ENCODE measurements at regions of chr1 and their contacts with region 1.

Region 1: DNA sequence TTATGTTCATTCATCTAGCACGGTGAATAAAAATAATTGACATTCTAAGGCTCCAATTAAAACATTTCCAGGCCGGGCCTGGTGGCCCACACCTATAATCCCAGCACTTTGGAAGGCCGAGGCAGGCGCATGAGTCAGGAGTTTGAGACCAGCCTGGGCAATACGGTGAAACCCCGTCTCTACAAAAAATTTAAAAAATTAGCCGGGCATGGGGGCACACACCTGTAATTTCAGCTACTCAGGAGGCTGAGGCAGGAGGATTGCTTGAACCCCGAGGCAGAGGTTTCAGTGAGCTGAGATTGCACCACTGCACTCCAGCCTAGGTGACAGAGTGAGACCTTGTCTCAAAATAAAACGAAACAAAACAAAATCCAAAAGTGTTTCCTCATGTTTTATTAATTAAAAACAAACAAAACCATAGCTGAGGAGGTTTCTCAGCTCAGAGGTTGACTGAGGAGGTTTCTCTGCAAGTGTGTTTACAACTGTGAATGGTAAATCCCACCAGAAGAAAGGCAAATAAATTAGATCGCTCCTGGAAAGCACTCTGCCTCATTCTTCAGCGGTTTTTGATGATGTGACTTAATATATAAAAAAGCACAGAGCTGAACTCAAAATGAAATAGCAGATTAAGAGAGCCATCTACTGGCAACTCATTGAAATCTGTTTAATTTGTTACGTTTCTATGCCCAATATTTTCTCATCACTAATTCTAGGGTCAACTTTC is 37.7 kb upstream of the ATG4C start:
- DNase-seq: no peak
- ATAC-seq: no peak
- H3K4me3 Mint-ChIP-seq: no peak overlapping the region
- H3K27ac Mint-ChIP-seq: no peak overlapping the region
- H3K4me1 Mint-ChIP-seq: no peaks in the 10 kb centered on the region
- H3K27me3 Mint-ChIP-seq: peaks cover 4% of the 10 kb centered on the region

Region 2: DNA sequence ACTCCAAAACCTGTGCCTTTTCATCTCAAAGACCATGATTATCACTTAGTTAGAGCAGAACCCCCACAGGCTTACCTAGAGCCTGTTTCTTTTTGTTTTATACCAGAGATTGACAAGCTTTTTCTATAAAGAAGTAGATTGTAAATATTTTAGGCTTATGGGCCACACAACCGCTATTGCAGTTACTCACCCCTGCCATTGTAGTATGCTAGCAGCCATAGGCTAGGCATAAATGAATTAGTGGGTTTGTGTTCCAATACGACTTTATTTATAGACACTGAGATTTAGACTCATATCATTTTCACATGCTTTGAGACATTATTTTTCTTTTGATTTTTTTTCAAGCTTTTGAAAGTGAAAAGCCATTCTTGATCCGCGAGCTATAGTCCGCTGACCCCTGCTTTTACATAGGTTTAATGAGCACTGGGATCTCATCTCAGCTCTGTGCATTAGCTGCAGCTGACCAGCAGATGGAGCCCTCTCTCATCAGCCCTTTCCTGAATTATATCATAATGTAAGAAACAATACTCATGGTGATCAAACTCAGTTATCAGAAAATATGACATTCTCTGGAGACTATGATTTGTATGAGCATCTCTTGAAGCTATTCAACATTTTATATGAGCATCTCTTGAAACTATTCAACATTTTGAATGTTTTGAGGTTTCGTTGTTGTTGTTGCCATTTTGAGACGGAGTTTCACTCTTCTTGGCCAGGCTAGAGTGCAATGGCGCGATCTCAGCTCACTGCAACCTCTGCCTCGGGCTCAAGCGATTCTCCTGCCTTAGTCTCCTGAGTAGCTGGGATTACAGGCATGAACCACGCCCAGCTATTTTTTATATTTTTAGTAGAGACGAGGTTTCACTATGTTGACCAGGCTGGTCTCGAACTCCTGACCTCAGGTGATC is 663.5 kb before region 1 on chr1:
- CTCF ChIA-PET with region 1: no interaction called
- POLR2A ChIA-PET with region 1: no interaction called
- intact Hi-C with region 1: loop called (anchors 5 kb)
- DNase-seq: peak; percentile 61
- ATAC-seq: peak; percentile 80
- H3K4me3 Mint-ChIP-seq: no peak overlapping the region
- H3K27ac Mint-ChIP-seq: no peak overlapping the region
- H3K4me1 Mint-ChIP-seq: no peaks in the 10 kb centered on the region
- H3K27me3 Mint-ChIP-seq: no peaks in the 10 kb centered on the region

Region 3: DNA sequence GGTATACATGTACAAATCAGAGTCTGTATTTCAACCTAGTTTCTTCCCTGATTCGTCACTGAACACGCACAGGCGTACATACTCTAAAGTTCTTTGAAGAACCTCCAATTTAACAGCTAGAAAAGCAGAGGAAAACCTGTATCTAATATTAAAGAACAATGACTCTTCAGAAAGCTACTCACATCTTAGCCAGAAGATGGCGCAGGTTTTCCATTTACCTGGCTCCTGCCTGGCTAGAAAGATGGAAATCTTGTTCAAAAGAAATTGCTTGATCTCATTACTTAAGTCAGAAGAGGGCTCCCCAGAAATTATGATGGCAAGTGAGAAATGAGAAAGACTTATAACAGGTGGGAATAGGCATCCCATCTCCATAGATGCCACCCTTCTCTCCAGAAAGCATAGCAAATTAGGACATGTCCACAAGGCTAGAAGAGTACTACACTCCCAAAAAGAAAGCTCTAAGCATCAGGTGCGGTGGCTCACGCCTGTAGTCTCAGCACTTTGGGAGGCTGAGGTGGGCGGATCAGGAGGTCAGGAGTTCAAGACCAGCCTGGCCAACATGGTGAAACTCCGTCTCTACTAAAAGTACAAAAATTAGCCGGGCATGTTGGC is 570.6 kb before region 1 on chr1:
- CTCF ChIA-PET with region 1: interaction called, 10 read pairs
- POLR2A ChIA-PET with region 1: no interaction called
- intact Hi-C with region 1: loop called (anchors 1 kb)
- DNase-seq: peak; percentile 52
- ATAC-seq: peak; percentile 51
- H3K4me3 Mint-ChIP-seq: no peak overlapping the region
- H3K27ac Mint-ChIP-seq: no peak overlapping the region
- H3K4me1 Mint-ChIP-seq: no peaks in the 10 kb centered on the region
- H3K27me3 Mint-ChIP-seq: no peaks in the 10 kb centered on the region

Region 4: GRCh38 chr1:62391369-62391971 is 354.8 kb before region 1 on chr1:
- CTCF ChIA-PET with region 1: interaction called, 3 read pairs
- POLR2A ChIA-PET with region 1: no interaction called
- intact Hi-C with region 1: loop called in 1 of 2 experiments (anchors 1 kb)
- DNase-seq: peak; percentile 63
- ATAC-seq: peak; percentile 71
- H3K4me3 Mint-ChIP-seq: no peak overlapping the region
- H3K27ac Mint-ChIP-seq: no peak overlapping the region
- H3K4me1 Mint-ChIP-seq: no peaks in the 10 kb centered on the region
- H3K27me3 Mint-ChIP-seq: peaks cover 4% of the 10 kb centered on the region

Region 5: DNA sequence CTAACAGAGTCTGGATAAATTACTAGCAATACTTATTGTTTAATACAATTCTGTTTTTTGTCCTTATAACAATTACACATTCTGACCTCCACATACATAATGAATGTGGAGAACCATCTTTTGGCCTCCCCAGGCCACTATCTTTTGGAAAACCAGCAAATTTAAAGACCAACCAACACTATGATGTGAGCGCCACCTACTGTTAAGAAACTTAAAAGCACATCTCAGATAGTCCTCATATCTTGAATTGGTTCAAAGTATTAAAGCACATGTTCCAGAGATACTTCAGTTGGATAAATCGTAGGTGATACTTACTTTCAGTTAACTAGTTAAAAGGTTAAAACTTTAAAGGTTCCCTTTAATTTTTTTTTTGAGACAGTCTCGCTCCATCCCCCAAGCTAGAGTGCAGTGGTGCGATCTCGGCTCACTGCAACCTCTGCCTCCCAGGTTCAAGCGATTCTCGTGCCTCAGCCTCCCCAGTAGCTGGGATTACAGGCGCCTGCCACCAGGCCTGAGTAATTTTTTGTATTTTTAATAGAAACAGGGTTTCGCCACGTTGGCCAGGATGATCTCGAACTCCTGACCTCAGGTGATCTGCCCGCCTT is 338.7 kb before region 1 on chr1:
- CTCF ChIA-PET with region 1: interaction called, 7 read pairs
- POLR2A ChIA-PET with region 1: no interaction called
- intact Hi-C with region 1: loop called in 1 of 2 experiments (anchors 2 kb)
- DNase-seq: no peak
- ATAC-seq: peak; percentile 49
- H3K4me3 Mint-ChIP-seq: no peak overlapping the region
- H3K27ac Mint-ChIP-seq: no peak overlapping the region
- H3K4me1 Mint-ChIP-seq: no peaks in the 10 kb centered on the region
- H3K27me3 Mint-ChIP-seq: no peaks in the 10 kb centered on the region

Region 6: DNA sequence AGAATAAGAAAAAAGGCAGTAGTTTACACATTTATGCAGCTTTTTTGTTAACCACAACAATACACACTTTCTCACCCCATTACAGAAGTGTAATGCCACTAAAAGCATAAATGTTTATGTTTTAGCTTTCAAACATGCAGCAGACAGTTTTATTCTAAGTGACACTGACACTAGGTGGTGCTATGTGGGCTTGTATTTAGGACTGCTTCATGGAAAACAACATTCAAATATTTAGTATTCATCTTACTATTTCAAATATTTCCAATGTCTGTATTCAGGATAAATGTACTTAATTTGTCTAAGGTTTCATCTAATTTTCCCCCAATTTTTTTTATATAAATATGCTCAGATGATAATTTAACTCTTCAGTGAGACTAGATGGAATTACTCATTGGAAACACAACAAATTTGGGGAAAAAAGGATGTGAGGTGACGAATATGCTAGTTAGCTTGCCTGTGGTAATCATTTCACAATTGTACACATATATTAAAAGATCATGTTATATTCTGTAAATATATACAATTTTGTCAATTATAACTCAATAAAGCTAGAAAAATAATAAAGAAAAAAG is 238.0 kb before region 1 on chr1:
- CTCF ChIA-PET with region 1: interaction called, 60 read pairs
- POLR2A ChIA-PET with region 1: no interaction called
- intact Hi-C with region 1: loop called (anchors 1 kb)
- DNase-seq: no peak
- ATAC-seq: no peak
- H3K4me3 Mint-ChIP-seq: no peak overlapping the region
- H3K27ac Mint-ChIP-seq: no peak overlapping the region
- H3K4me1 Mint-ChIP-seq: no peaks in the 10 kb centered on the region
- H3K27me3 Mint-ChIP-seq: no peaks in the 10 kb centered on the region

Region 7: GRCh38 chr1:62530516-62531154 is 215.6 kb before region 1 on chr1:
- CTCF ChIA-PET with region 1: interaction called, 10 read pairs
- POLR2A ChIA-PET with region 1: no interaction called
- intact Hi-C with region 1: no loop called
- DNase-seq: peak; percentile 10
- ATAC-seq: no peak
- H3K4me3 Mint-ChIP-seq: no peak overlapping the region
- H3K27ac Mint-ChIP-seq: no peak overlapping the region
- H3K4me1 Mint-ChIP-seq: no peaks in the 10 kb centered on the region
- H3K27me3 Mint-ChIP-seq: no peaks in the 10 kb centered on the region

Region 8: GRCh38 chr1:63442141-63442475 is 695.9 kb after region 1 on chr1:
- CTCF ChIA-PET with region 1: no interaction called
- POLR2A ChIA-PET with region 1: no interaction called
- intact Hi-C with region 1: no loop called
- DNase-seq: no peak
- ATAC-seq: no peak
- H3K4me3 Mint-ChIP-seq: no peak overlapping the region
- H3K27ac Mint-ChIP-seq: no peak overlapping the region
- H3K4me1 Mint-ChIP-seq: no peaks in the 10 kb centered on the region
- H3K27me3 Mint-ChIP-seq: no peaks in the 10 kb centered on the region